OCI-LY7 (cell line): ENCODE measurements at regions of chr3 and their contacts with region 1.

Region 1: DNA sequence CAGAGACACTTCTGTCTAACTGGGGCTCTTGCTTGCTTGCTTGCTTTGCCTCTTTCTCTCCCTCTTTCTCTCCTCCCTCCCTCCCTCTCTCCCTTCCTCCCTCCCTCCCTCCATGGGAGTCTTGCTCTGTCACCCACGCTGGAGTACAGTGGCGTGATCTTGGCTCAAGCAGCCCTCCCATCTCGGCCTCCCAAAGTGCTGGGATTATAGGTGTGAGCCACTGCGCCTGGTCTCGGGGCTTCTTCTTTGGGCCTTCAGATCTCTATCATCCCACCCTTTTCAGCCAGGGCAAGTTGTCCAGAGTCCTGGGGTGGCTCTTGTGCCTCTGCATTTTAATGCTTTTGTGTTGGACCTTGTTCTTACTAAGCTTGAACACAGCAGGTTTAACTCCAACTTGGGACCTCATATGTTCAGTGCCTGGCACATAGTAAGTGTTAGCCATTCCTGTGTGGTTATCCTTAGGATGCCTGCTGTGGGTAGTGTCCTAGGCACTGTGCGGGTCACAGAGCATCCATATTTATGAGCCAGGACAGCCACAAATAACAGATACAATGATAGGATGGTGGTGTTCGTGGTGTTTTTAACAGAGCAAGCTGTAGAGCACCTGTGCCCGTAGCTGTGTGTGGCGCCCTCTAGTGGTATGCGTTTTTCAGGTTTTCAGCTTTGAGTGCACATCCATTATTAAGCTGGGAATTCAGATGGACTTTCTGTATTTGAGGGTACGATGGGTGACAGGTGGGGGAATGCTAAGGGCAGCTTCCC is 75.1 kb downstream of the CCK start:
- DNase-seq: peak; percentile 84
- H3K4me3 ChIP-seq: no peak overlapping the region
- H3K27ac ChIP-seq: peak overlapping the region; percentile 92
- H3K4me1 ChIP-seq: peaks cover 63% of the 10 kb centered on the region
- CTCF ChIP-seq: peak; percentile 99

Region 2: GRCh38 chr3:41893977-41894376 is 296.9 kb before region 1 on chr3:
- CTCF ChIA-PET with region 1: no interaction called
- POLR2A ChIA-PET with region 1: no interaction called
- intact Hi-C with region 1: loop called (anchors 1 kb)
- DNase-seq: peak; percentile 38
- H3K4me3 ChIP-seq: no peak overlapping the region
- H3K27ac ChIP-seq: no peak overlapping the region
- H3K4me1 ChIP-seq: peaks cover 9% of the 10 kb centered on the region
- CTCF ChIP-seq: peak; percentile 88

Region 3: GRCh38 chr3:42129014-42129953 is 61.6 kb before region 1 on chr3:
- CTCF ChIA-PET with region 1: interaction called, 8 read pairs
- POLR2A ChIA-PET with region 1: interaction called, 16 read pairs
- intact Hi-C with region 1: loop called (anchors 1 kb)
- DNase-seq: peak; percentile 66
- H3K4me3 ChIP-seq: peak overlapping the region; percentile 58
- H3K27ac ChIP-seq: peak overlapping the region; percentile 94
- H3K4me1 ChIP-seq: peaks cover 57% of the 10 kb centered on the region
- CTCF ChIP-seq: no peak

Region 4: GRCh38 chr3:42173307-42173706 is 17.6 kb before region 1 on chr3:
- CTCF ChIA-PET with region 1: interaction called, 13 read pairs
- POLR2A ChIA-PET with region 1: interaction called, 14 read pairs
- intact Hi-C with region 1: loop called (anchors 1 kb)
- DNase-seq: peak; percentile 45
- H3K4me3 ChIP-seq: peak overlapping the region; percentile 25
- H3K27ac ChIP-seq: peak overlapping the region; percentile 99
- H3K4me1 ChIP-seq: peaks cover 95% of the 10 kb centered on the region
- CTCF ChIP-seq: no peak

Region 5: DNA sequence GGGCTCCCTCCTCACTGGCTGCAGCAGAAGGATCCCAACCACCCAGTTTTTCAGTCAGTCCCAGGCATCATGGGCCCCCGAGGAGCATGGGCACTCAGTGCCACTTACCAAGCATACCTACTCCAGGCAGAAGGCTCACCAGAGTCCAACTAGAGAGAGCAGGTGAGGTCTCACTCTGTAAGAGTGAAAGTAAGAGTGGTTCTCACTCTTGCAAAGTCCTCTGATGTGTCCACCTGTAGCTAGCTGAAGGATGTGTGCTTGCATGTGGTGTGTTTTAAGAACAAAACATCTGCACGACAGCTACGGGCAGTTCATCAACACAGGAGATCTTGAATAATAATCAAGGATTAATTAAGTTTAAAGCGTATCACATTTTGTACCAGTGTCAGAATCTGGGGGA is 25.4 kb after region 1 on chr3:
- CTCF ChIA-PET with region 1: interaction called, 9 read pairs
- POLR2A ChIA-PET with region 1: interaction called, 7 read pairs
- intact Hi-C with region 1: loop called (anchors 2 kb)
- DNase-seq: peak; percentile 65
- H3K4me3 ChIP-seq: peak overlapping the region; percentile 30
- H3K27ac ChIP-seq: peak overlapping the region; percentile 57
- H3K4me1 ChIP-seq: peaks cover 43% of the 10 kb centered on the region
- CTCF ChIP-seq: no peak

Region 6: GRCh38 chr3:42547401-42547945 is 356.6 kb after region 1 on chr3:
- CTCF ChIA-PET with region 1: no interaction called
- POLR2A ChIA-PET with region 1: no interaction called
- intact Hi-C with region 1: no loop called
- DNase-seq: peak; percentile 58
- H3K4me3 ChIP-seq: no peak overlapping the region
- H3K27ac ChIP-seq: no peak overlapping the region
- H3K4me1 ChIP-seq: no peaks in the 10 kb centered on the region
- CTCF ChIP-seq: peak; percentile 99

Region 7: DNA sequence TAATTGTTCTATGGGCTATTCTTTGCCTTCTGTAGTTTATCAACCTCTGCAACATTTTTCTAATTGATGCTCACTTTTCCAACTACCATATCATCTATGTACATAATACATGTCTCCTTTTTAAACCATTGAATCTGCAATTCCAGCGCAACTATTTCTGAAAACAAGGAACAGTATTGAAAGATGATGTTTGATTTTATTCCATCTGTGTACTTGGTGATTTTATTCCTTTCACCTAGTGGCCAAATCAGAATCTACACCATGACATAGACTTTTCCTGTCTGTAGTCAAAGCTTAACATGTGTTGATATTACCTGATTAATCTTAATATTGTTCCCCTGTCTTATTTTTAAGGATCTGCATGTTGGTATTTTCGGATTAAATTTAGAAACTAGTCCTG is 422.6 kb after region 1 on chr3:
- CTCF ChIA-PET with region 1: no interaction called
- POLR2A ChIA-PET with region 1: no interaction called
- intact Hi-C with region 1: no loop called
- DNase-seq: peak; percentile 14
- H3K4me3 ChIP-seq: no peak overlapping the region
- H3K27ac ChIP-seq: peak overlapping the region; percentile 54
- H3K4me1 ChIP-seq: peaks cover 38% of the 10 kb centered on the region
- CTCF ChIP-seq: peak; percentile 83